ENCODE measurements at regions of chr1 and their contacts with region 1.

Region 1: DNA sequence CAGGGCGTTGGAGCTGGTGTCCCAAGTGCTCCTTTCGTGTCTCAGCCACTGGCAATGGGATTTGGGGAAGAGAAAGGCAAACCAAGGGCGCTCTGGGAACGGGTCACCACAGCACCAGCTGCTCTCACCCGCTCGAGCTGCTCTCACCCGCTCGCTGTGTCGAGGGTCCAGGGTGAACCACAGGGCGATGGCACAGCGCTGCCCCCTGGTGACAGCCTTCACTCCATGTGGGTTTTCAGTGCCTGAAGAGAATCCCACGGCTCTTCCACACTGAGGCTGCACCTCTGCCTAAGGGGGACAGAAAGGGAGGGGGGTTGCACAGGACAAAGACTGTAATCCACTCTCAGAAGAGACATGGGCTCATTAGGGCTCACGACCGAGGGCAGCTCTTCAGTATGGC is 7.1 kb upstream of the CLDN19 start:
- DNase-seq: no peak
- H3K4me3 ChIP-seq: no peak overlapping the region
- H3K27ac ChIP-seq: no peak overlapping the region
- H3K4me1 ChIP-seq: no peaks in the 10 kb centered on the region
- H3K27me3 ChIP-seq: no peaks in the 10 kb centered on the region
- CTCF ChIP-seq: peak; percentile 16 to 54 (median 40)
- EP300 ChIP-seq: no peak
- POLR2A ChIP-seq: no peak

Region 2: GRCh38 chr1:42576935-42577334 is 170.2 kb before region 1 on chr1:
- intact Hi-C with region 1: loop called (anchors 10 kb)
- DNase-seq: no peak
- H3K4me3 ChIP-seq: no peak overlapping the region
- H3K27ac ChIP-seq: no peak overlapping the region
- H3K4me1 ChIP-seq: no peaks in the 10 kb centered on the region
- H3K27me3 ChIP-seq: no peaks in the 10 kb centered on the region
- CTCF ChIP-seq: no peak
- EP300 ChIP-seq: no peak
- POLR2A ChIP-seq: no peak

Region 3: GRCh38 chr1:42593486-42594100 is 153.5 kb before region 1 on chr1:
- intact Hi-C with region 1: no loop called
- DNase-seq: no peak
- H3K4me3 ChIP-seq: no peak overlapping the region
- H3K27ac ChIP-seq: no peak overlapping the region
- H3K4me1 ChIP-seq: no peaks in the 10 kb centered on the region
- H3K27me3 ChIP-seq: no peaks in the 10 kb centered on the region
- CTCF ChIP-seq: no peak
- EP300 ChIP-seq: no peak
- POLR2A ChIP-seq: no peak

Measured in sigmoid colon (tissue), 7 donors.